ENCODE measurements at regions of chr7 and their contacts with region 1.

Region 1: GRCh38 chr7:92343719-92344118 is 97.9 kb downstream of the ANKIB1 start:
- DNase-seq: no peak
- H3K4me3 Mint-ChIP-seq: no peak overlapping the region
- H3K27ac Mint-ChIP-seq: no peak overlapping the region
- H3K4me1 Mint-ChIP-seq: no peaks in the 10 kb centered on the region
- H3K27me3 Mint-ChIP-seq: no peaks in the 10 kb centered on the region
- CTCF ChIP-seq: no peak

Region 2: DNA sequence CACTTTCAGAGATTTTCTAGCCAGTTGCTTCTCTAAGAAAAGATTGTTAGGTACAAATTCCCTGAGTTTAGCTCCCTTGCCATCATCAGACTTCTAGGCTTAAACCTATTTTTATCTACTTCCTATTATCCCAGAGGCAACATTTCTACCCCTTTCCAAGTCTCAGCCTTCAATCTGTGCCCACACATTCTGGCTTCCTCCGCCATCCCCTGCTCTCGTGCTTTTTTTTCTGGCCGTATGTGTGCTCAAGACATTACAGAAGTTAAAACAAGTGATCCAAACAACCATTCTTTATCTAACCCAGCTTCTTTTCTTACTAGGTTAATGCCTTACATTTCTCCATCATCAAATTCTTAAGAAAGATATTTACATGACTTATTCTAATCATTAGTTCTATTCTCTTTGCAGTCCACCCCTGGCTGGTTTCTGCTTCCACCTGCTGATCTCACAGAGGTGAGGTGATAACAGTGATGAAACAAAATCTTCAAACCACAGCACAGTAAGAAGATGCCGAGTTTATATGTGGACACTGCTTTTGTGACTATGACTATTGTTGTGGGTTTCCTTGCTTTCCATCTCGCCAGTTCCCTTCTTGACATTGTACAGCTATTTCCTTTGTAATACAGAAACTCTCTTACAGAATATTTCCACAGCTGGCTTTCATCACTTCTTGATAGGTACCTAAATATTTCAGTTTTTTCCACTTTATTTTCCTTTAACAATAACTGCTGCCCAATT is 511.0 kb after region 1 on chr7:
- CTCF ChIA-PET with region 1: no interaction called
- POLR2A ChIA-PET with region 1: no interaction called
- intact Hi-C with region 1: loop called (anchors 10 kb)
- DNase-seq: no peak
- H3K4me3 Mint-ChIP-seq: no peak overlapping the region
- H3K27ac Mint-ChIP-seq: no peak overlapping the region
- H3K4me1 Mint-ChIP-seq: no peaks in the 10 kb centered on the region
- H3K27me3 Mint-ChIP-seq: no peaks in the 10 kb centered on the region
- CTCF ChIP-seq: no peak

Measured in MCF 10A (cell line).